Dendritic cell treated with granulocyte-macrophage colony-stimulating factor and Interleukin-4, amounts not matched to agents 40 ng/mL and 50 ng/mL, for 4 days (primary cell): ENCODE measurements at regions of chr19 and their contacts with region 1.

Region 1: DNA sequence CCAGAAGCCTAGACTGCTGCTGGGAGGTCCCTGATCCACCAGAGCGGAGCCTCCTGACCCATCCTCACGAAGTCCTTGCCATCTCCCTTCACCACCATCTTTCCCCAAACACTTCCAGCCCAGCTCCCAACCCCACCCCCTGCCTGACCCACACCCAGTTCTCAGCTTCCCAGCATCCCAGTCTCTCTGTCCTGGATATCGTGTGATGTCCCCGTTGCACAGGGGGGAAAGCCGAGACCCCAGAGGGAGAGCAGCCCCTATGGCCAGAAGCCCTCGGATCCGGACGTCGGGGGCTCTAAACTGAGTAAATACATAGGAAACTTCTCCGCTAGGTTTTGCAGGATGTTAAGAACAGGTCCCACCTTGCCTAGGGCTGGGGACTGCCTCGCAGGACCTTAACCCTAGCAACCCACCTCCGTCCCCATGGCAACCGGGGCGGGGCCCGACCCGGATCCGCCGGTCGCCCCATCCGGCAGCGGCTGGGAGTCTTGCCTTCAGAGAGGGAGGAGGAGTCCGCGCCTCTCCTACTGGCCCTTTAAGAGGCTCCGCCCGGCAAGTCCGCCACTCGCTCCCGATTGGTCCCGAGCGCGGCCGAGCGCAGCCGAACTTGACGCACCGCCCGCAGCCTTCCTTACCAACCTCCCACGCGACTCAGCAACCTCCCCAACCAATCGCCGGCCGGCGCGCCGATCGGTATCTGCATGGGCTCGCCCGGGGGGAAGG is 451 bp upstream of the HMG20B start:
- H3K4me3 Mint-ChIP-seq: peak overlapping the region; percentile 88
- H3K27ac Mint-ChIP-seq: peak overlapping the region; percentile 85
- H3K4me1 Mint-ChIP-seq: peaks cover 56% of the 10 kb centered on the region
- H3K27me3 Mint-ChIP-seq: no peaks in the 10 kb centered on the region

Region 2: GRCh38 chr19:3505598-3506383 is 66.5 kb before region 1 on chr19 and contains the start of gene FZR1:
- intact Hi-C with region 1: loop called (anchors 2 kb)
- H3K4me3 Mint-ChIP-seq: peak within 1 kb of the TSS; percentile 99
- H3K27ac Mint-ChIP-seq: peak within 1 kb of the TSS; percentile 95
- H3K4me1 Mint-ChIP-seq: peaks cover 55% of the 10 kb centered on the region
- H3K27me3 Mint-ChIP-seq: no peaks in the 10 kb centered on the region

Region 3: GRCh38 chr19:3557461-3558248 is 14.6 kb before region 1 on chr19 and contains the start of gene MFSD12:
- intact Hi-C with region 1: loop called (anchors 2 kb)
- H3K4me3 Mint-ChIP-seq: peak within 1 kb of the TSS; percentile 95
- H3K27ac Mint-ChIP-seq: peak within 1 kb of the TSS; percentile 89
- H3K4me1 Mint-ChIP-seq: peaks cover 54% of the 10 kb centered on the region
- H3K27me3 Mint-ChIP-seq: no peaks in the 10 kb centered on the region

Region 4: GRCh38 chr19:3626473-3627350 is 54.4 kb after region 1 on chr19 and contains the start of gene CACTIN:
- intact Hi-C with region 1: no loop called
- H3K4me3 Mint-ChIP-seq: peak within 1 kb of the TSS; percentile 95
- H3K27ac Mint-ChIP-seq: peak within 1 kb of the TSS; percentile 94
- H3K4me1 Mint-ChIP-seq: peaks cover 31% of the 10 kb centered on the region
- H3K27me3 Mint-ChIP-seq: no peaks in the 10 kb centered on the region

Region 5: GRCh38 chr19:3687774-3688706 is 115.7 kb after region 1 on chr19:
- intact Hi-C with region 1: no loop called
- H3K4me3 Mint-ChIP-seq: no peak overlapping the region
- H3K27ac Mint-ChIP-seq: peak overlapping the region; percentile 43
- H3K4me1 Mint-ChIP-seq: peaks cover 72% of the 10 kb centered on the region
- H3K27me3 Mint-ChIP-seq: peaks cover 7% of the 10 kb centered on the region